ENCODE measurements at regions of chr7 and their contacts with region 1.

Region 1: DNA sequence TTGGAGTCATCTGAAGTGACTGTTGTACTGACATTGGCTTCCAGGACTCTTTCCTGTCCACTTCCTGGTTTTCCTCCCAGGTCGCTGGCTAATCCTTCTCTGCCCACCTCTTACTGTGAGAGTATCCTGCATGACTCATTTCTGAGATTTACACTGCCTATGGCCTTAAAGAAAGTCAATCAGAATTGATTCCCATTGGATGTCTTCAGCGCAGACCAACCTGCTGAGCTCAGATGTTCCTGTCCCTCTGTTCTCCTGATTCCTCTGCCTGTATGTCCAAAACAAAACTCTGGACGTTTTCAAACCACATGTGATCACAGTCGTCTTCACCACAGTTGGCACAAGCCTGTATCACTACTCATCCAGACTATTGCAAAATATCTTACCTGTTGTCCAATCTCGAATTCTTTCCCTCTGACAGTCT is 262.1 kb downstream of the CREB5 start:
- DNase-seq: no peak
- H3K4me3 ChIP-seq: no peak overlapping the region
- H3K27ac ChIP-seq: no peak overlapping the region
- H3K4me1 ChIP-seq: no peaks in the 10 kb centered on the region
- H3K27me3 ChIP-seq: no peaks in the 10 kb centered on the region
- CTCF ChIP-seq: no peak
- EP300 ChIP-seq: no peak
- POLR2A ChIP-seq: no peak

Region 2: GRCh38 chr7:28410628-28411531 is 263.5 kb before region 1 on chr7:
- intact Hi-C with region 1: loop called (anchors 10 kb)
- DNase-seq: peak in 1 of 2 donors; percentile 73
- H3K4me3 ChIP-seq: peak overlapping the region; percentile 51 to 65 (median 54)
- H3K27ac ChIP-seq: peak overlapping the region in 3 of 5 donors; percentile 20 to 91 (median 76)
- H3K4me1 ChIP-seq: peaks cover 18 to 46% (median 33%) of the 10 kb centered on the region in 4 donors
- H3K27me3 ChIP-seq: peaks cover 0 to 87% (median 45%) of the 10 kb centered on the region in 3 donors
- CTCF ChIP-seq: no peak
- EP300 ChIP-seq: no peak
- POLR2A ChIP-seq: no peak

Region 3: DNA sequence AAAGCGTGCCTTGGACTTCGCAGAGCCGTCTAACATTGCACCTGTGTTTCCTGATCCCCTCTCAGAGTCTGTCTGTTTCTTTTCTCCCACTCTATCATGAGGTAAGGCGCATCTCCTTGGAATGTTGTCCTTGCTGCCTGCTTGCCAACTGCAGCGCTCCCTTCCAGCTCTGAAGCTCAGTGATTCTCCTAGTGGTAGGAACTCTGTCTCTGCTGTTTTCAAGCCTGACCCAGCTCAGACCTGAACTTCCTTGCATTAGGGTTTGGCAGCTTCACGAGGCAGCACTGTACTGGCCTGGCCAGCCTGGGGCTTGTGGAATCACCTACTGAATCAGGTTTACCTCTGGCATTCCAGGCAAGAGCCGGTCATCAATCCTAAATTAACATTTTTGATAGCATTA is 138.1 kb before region 1 on chr7:
- intact Hi-C with region 1: no loop called
- DNase-seq: peak in 1 of 2 donors; percentile 67
- H3K4me3 ChIP-seq: no peak overlapping the region
- H3K27ac ChIP-seq: no peak overlapping the region
- H3K4me1 ChIP-seq: peaks cover 0 to 9% (median 5%) of the 10 kb centered on the region in 4 donors
- H3K27me3 ChIP-seq: peaks cover 0 to 6% (median 0%) of the 10 kb centered on the region in 3 donors
- CTCF ChIP-seq: no peak
- EP300 ChIP-seq: no peak
- POLR2A ChIP-seq: no peak

Measured in stomach (tissue), 19 donors.